CD4-positive, alpha-beta memory T cell (primary cell): ENCODE measurements at regions of chr20 and their contacts with region 1.

Region 1: GRCh38 chr20:50338479-50339391 is 148.1 kb downstream of the CEBPB start:
- DNase-seq: peak in 4 of 5 donors; percentile 16 to 41 (median 30)
- H3K4me3 ChIP-seq: peak overlapping the region in 1 of 2 donors; percentile 40
- H3K4me3 Mint-ChIP-seq: peak overlapping the region; percentile 53 to 79 (median 70)
- H3K27ac ChIP-seq: peak overlapping the region; percentile 10
- H3K27ac Mint-ChIP-seq: peak overlapping the region; percentile 39 to 87 (median 77)
- H3K4me1 ChIP-seq: peaks cover 32% of the 10 kb centered on the region
- H3K4me1 Mint-ChIP-seq: peaks cover 20 to 35% (median 23%) of the 10 kb centered on the region in 4 donors
- H3K27me3 ChIP-seq: no peaks in the 10 kb centered on the region
- H3K27me3 Mint-ChIP-seq: no peaks in the 10 kb centered on the region

Region 2: DNA sequence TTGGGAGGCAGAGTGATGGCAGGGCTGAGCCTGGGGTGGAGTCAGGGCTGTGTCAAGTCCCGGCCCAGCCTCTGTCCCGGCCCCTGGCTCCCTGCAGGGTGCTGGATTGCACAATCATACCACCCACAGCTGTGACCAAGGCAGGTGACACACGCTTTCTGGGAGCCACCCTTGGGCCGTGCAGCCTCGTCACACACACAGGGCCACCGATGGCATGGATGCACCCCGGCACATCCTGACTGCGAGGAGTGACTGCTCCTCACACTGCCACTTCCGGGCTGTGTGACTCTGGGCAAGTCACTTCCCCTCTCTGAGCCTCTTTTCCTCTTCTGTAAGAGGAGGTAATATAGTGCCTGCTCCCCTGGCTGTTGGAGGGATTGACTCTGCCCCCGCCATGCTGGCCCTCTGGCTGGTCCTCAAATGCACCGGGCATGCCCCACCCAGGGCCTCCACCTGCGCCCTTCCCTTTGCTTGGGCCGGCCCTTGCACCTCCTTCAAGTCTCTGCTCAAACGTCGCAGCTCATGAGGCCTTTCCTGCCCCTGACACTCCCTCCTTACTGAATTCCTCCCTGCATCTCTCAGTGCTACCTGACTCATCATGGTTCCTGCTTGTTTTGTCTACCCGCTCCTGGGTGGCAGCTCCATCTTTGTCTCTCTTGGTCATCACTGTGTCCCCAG is 54.7 kb before region 1 on chr20:
- CTCF ChIA-PET with region 1: no interaction called
- POLR2A ChIA-PET with region 1: no interaction called
- intact Hi-C with region 1: no loop called
- DNase-seq: no peak
- H3K4me3 ChIP-seq: no peak overlapping the region
- H3K4me3 Mint-ChIP-seq: no peak overlapping the region
- H3K27ac ChIP-seq: no peak overlapping the region
- H3K27ac Mint-ChIP-seq: peak overlapping the region in 1 of 7 donors; percentile 5
- H3K4me1 ChIP-seq: peaks cover 6% of the 10 kb centered on the region
- H3K4me1 Mint-ChIP-seq: peaks cover 8 to 21% (median 13%) of the 10 kb centered on the region in 4 donors
- H3K27me3 ChIP-seq: no peaks in the 10 kb centered on the region
- H3K27me3 Mint-ChIP-seq: peaks cover 4 to 6% of the 10 kb centered on the region in 2 donors

Region 3: DNA sequence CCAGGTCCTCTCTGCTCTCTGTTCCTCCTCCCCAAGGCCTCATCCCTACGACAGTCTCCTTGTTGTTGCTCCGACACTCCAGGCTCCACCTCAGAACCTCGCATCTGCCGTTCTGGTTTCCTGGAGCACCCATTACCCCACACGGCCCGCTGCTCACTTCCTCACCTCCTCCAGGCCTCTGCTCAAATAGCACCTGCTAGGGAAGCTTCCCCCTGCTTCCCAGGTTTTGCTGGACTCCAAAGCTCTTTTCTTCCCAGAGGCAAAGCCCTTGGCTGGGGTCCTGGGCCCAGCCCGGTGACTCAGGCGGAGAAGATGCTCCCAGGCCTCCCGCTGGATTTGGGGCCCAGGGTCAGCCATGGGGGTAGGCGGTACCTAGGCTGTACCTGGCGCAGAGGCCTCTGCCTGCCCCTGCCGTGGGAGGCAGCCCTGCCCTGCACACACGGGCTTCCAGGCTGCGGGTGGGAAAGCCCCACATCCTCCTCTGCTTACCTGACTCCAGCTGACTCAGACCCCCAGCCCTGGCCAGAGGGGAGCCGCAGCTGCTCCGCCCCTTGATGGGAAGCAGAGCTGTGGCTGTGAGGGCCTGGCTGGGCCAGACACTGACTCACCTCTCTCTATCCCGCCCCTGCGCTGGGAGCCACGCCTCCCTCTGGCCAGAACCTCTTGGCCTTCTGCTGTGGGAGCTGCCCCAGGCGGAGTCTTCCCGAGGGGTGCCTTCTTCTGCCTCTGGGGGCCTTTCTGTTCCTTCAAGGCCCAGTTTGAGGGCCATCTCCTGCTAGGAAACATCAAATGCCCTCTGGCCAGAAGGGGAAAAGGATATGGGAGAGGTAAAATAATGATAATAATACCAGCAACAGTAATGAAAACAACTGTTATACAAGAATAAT is 17.6 kb before region 1 on chr20:
- CTCF ChIA-PET with region 1: no interaction called
- POLR2A ChIA-PET with region 1: no interaction called
- intact Hi-C with region 1: no loop called
- DNase-seq: no peak
- H3K4me3 ChIP-seq: no peak overlapping the region
- H3K4me3 Mint-ChIP-seq: no peak overlapping the region
- H3K27ac ChIP-seq: no peak overlapping the region
- H3K27ac Mint-ChIP-seq: no peak overlapping the region
- H3K4me1 ChIP-seq: no peaks in the 10 kb centered on the region
- H3K4me1 Mint-ChIP-seq: no peaks in the 10 kb centered on the region
- H3K27me3 ChIP-seq: no peaks in the 10 kb centered on the region
- H3K27me3 Mint-ChIP-seq: peaks cover 6 to 14% of the 10 kb centered on the region in 2 donors

Region 4: GRCh38 chr20:50385733-50386640 is 47.3 kb after region 1 on chr20:
- CTCF ChIA-PET with region 1: no interaction called
- POLR2A ChIA-PET with region 1: interaction called, 3 read pairs
- intact Hi-C with region 1: loop called (anchors 2 kb)
- DNase-seq: peak; percentile 77 to 86 (median 82)
- H3K4me3 ChIP-seq: peak overlapping the region in 1 of 2 donors; percentile 24
- H3K4me3 Mint-ChIP-seq: peak overlapping the region; percentile 27 to 76 (median 64)
- H3K27ac ChIP-seq: peak overlapping the region; percentile 37
- H3K27ac Mint-ChIP-seq: peak overlapping the region; percentile 35 to 96 (median 88)
- H3K4me1 ChIP-seq: peaks cover 55% of the 10 kb centered on the region
- H3K4me1 Mint-ChIP-seq: peaks cover 34 to 73% (median 57%) of the 10 kb centered on the region in 4 donors
- H3K27me3 ChIP-seq: no peaks in the 10 kb centered on the region
- H3K27me3 Mint-ChIP-seq: no peaks in the 10 kb centered on the region